Kidney (tissue), 22 donors: ENCODE measurements at regions of chr22 and their contacts with region 1.

Region 1: GRCh38 chr22:44574065-44574464 is 76.0 kb upstream of the RTL6 start:
- DNase-seq: no peak
- H3K4me3 ChIP-seq: no peak overlapping the region
- H3K27ac ChIP-seq: no peak overlapping the region
- H3K4me1 ChIP-seq: peaks cover 0 to 2% (median 0%) of the 10 kb centered on the region in 3 donors
- H3K27me3 ChIP-seq: no peaks in the 10 kb centered on the region
- CTCF ChIP-seq: no peak

Region 2: GRCh38 chr22:44080936-44081861 is 492.9 kb before region 1 on chr22:
- intact Hi-C with region 1: loop called (anchors 5 kb)
- DNase-seq: peak in 4 of 5 donors; percentile 83 to 88 (median 86)
- H3K4me3 ChIP-seq: no peak overlapping the region
- H3K27ac ChIP-seq: no peak overlapping the region
- H3K4me1 ChIP-seq: no peaks in the 10 kb centered on the region
- H3K27me3 ChIP-seq: no peaks in the 10 kb centered on the region
- CTCF ChIP-seq: peak; percentile 66

Region 3: GRCh38 chr22:44309137-44309536 is 264.9 kb before region 1 on chr22:
- intact Hi-C with region 1: no loop called
- DNase-seq: no peak
- H3K4me3 ChIP-seq: no peak overlapping the region
- H3K27ac ChIP-seq: no peak overlapping the region
- H3K4me1 ChIP-seq: no peaks in the 10 kb centered on the region
- H3K27me3 ChIP-seq: no peaks in the 10 kb centered on the region
- CTCF ChIP-seq: no peak

Region 4: DNA sequence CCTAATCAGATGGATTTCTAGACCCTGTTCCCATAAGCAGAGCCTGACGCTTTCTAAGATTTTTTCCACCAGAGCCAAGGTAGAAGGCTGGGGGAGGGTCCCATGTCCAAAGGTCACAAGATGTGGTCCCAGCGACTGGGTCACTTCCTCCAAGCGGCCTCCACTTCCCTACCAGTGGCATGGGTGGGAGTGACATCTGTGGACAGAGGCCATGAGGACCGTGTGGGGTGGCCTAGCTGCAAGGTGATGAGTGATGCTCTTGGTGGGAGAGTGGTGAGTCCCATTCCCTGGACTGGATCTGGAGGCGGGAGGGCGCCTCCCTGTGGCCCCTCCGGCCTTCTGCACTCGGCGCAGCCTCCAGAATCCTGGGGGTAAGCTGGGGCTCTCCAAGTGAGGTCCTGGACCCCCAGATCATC is 95.5 kb after region 1 on chr22:
- intact Hi-C with region 1: no loop called
- DNase-seq: peak in 2 of 5 donors; percentile 67 to 73
- H3K4me3 ChIP-seq: peak overlapping the region in 2 of 3 donors; percentile 11 to 52
- H3K27ac ChIP-seq: no peak overlapping the region
- H3K4me1 ChIP-seq: peaks cover 0 to 13% (median 0%) of the 10 kb centered on the region in 3 donors
- H3K27me3 ChIP-seq: no peaks in the 10 kb centered on the region
- CTCF ChIP-seq: no peak